CD4-positive, alpha-beta T cell (primary cell): ENCODE measurements at regions of chr11 and their contacts with region 1.

Region 1: DNA sequence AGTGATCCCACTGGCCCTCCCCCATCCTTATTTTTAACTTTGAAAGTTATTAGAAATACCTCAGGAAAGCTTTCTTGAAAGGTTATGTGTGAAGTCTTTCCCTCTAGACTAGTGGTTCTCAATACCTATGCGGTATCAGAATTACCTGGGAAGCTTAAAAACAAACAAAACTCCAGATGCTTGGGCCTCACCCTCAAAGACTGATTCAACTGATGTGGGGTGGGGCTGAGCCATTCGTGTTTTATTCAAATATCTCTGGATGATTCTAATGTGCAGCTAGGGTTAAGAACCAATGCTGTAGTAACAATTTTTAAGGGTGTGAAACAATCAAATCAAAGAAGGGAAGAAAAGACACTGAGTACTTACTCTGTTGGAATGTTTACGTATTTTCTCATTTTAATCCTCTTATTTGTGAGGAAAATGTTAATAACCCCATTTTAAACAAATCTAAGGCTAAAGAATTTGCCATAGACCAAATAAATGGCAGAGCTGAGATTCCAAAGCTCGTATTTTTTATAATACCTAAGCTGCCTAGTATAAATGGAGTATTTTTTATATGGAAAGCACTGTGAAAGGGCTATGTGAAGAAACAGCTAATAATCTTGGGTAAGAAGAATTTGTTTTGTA is 47.6 kb downstream of the PLEKHB1 start:
- DNase-seq: no peak
- ATAC-seq: no peak
- H3K4me3 ChIP-seq: no peak overlapping the region
- H3K4me3 Mint-ChIP-seq: no peak overlapping the region
- H3K27ac ChIP-seq: no peak overlapping the region
- H3K27ac Mint-ChIP-seq: no peak overlapping the region
- H3K4me1 ChIP-seq: no peaks in the 10 kb centered on the region
- H3K4me1 Mint-ChIP-seq: no peaks in the 10 kb centered on the region
- H3K27me3 ChIP-seq: no peaks in the 10 kb centered on the region
- H3K27me3 Mint-ChIP-seq: no peaks in the 10 kb centered on the region
- CTCF ChIP-seq: no peak

Region 2: DNA sequence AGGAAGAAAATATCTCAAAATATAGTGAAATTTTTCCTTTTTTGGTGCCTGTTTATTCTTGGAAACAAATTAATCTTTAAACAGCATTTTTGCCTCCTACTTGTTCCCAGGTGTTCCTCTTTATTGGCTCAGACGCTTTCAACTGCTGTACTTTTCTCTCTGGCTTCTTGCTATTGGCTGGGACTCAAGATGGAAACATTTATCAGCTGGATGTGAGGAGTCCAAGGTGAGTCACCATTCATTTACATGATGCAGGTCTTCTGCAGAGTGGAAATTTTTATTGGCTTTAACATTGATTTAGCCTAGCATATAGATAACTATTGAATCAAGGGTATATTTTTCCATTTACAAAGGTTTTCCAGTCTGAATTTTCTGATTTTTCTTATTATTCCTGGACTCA is 222.4 kb after region 1 on chr11:
- CTCF ChIA-PET with region 1: no interaction called
- POLR2A ChIA-PET with region 1: no interaction called
- intact Hi-C with region 1: loop called in 1 of 2 experiments (anchors 10 kb)
- DNase-seq: no peak
- ATAC-seq: no peak
- H3K4me3 ChIP-seq: no peak overlapping the region
- H3K4me3 Mint-ChIP-seq: no peak overlapping the region
- H3K27ac ChIP-seq: no peak overlapping the region
- H3K27ac Mint-ChIP-seq: no peak overlapping the region
- H3K4me1 ChIP-seq: no peaks in the 10 kb centered on the region
- H3K4me1 Mint-ChIP-seq: no peaks in the 10 kb centered on the region
- H3K27me3 ChIP-seq: no peaks in the 10 kb centered on the region
- H3K27me3 Mint-ChIP-seq: no peaks in the 10 kb centered on the region
- CTCF ChIP-seq: no peak

Region 3: DNA sequence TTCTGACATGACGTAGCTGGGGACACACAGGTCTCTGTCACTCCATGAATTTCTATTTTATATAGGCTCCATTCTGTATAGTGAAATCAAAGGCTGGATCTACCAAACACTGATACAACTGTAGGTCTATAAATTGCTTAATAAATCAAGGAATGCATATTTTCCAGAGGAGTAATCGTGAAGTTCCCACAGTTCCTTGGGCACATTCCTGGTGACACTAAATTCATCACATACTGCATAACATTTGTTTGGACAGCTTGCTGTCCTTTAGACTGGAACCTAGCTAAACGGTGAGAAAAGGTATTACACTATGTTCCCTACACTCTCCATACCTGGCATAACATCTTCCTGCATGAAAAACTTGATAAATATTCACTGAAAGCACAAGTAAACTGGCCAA is 356.5 kb after region 1 on chr11:
- CTCF ChIA-PET with region 1: no interaction called
- POLR2A ChIA-PET with region 1: no interaction called
- intact Hi-C with region 1: no loop called
- DNase-seq: no peak
- ATAC-seq: no peak
- H3K4me3 ChIP-seq: no peak overlapping the region
- H3K4me3 Mint-ChIP-seq: no peak overlapping the region
- H3K27ac ChIP-seq: no peak overlapping the region
- H3K27ac Mint-ChIP-seq: no peak overlapping the region
- H3K4me1 ChIP-seq: no peaks in the 10 kb centered on the region
- H3K4me1 Mint-ChIP-seq: no peaks in the 10 kb centered on the region
- H3K27me3 ChIP-seq: no peaks in the 10 kb centered on the region
- H3K27me3 Mint-ChIP-seq: no peaks in the 10 kb centered on the region
- CTCF ChIP-seq: no peak